ENCODE measurements at regions of chr2 and their contacts with region 1.

Region 1: DNA sequence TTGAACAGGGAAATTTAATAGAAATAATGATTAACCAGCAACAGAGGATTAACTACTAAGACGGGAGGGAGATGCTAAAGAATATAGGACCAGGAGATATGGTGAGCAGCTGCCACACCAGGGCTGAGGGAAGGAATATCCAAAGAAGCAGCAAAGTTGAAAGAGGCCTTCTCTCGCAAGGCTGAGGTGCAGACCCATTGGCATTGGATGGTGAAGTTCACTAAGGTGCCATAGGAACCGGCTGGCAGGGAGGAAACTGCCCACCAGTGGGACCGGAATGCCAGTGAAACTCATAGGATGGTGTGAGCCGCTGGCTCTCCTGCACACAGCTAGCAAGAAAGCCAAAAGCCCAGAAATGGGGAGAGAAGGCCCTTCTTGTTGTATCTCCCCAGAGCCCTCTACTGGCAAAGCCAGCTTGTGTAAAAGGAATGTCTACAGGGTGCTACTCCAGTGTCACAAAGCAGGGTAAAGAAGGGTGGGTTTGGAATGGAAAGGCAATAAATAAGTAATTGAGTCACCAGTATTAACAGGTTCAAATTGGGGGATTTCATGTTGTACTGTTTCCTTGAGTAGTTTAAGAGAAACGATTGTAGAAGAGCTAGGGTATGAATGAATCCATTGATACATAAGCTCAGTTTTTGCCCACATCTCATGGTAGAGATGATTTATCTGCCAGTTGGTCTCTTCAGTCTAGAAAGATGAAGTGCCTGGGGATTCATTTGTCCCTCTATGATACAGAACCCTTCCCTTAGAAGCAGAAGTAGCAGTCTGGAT is 36.0 kb downstream of the FARP2 start:
- DNase-seq: no peak
- ATAC-seq: peak; percentile 89
- H3K4me3 ChIP-seq: no peak overlapping the region
- H3K27ac ChIP-seq: 0 out of 2 replicates have a peak overlapping the region, but pooled peaks have one; percentile 18
- H3K4me1 ChIP-seq: peaks cover 42% of the 10 kb centered on the region
- H3K27me3 ChIP-seq: no peaks in the 10 kb centered on the region
- CTCF ChIP-seq: peak; percentile 63 to 68 (median 65)
- EP300 ChIP-seq: no peak
- POLR2A ChIP-seq: no peak
- RAD21 ChIP-seq: peak; percentile 63

Region 2: GRCh38 chr2:241271641-241272297 is 120.3 kb before region 1 on chr2:
- CTCF ChIA-PET with region 1: interaction called, 10 read pairs
- POLR2A ChIA-PET with region 1: no interaction called
- RAD21 ChIA-PET with region 1: interaction called, 6 read pairs
- SMC1A ChIA-PET with region 1: interaction called, 4 read pairs
- in situ Hi-C with region 1: no loop called
- intact Hi-C with region 1: no loop called
- DNase-seq: no peak
- ATAC-seq: peak; percentile 85
- H3K4me3 ChIP-seq: peak overlapping the region; percentile 75
- H3K27ac ChIP-seq: peak overlapping the region; percentile 79
- H3K4me1 ChIP-seq: peaks cover 17% of the 10 kb centered on the region
- H3K27me3 ChIP-seq: no peaks in the 10 kb centered on the region
- CTCF ChIP-seq: no peak
- EP300 ChIP-seq: no peak
- POLR2A ChIP-seq: peak; percentile 40
- RAD21 ChIP-seq: no peak

Region 3: GRCh38 chr2:241315093-241315878 is 76.8 kb before region 1 on chr2 and contains the start of gene HDLBP:
- CTCF ChIA-PET with region 1: interaction called, 23 read pairs
- POLR2A ChIA-PET with region 1: interaction called, 3 read pairs
- RAD21 ChIA-PET with region 1: interaction called, 13 read pairs
- SMC1A ChIA-PET with region 1: interaction called, 28 read pairs
- in situ Hi-C with region 1: no loop called
- intact Hi-C with region 1: loop called (anchors 5 kb)
- DNase-seq: peak; percentile 96
- ATAC-seq: peak; percentile 80
- H3K4me3 ChIP-seq: peak within 1 kb of the TSS; percentile 90
- H3K27ac ChIP-seq: peak within 1 kb of the TSS; percentile 95
- H3K4me1 ChIP-seq: peaks cover 17% of the 10 kb centered on the region
- H3K27me3 ChIP-seq: no peaks in the 10 kb centered on the region
- CTCF ChIP-seq: peak; percentile 12 to 39 (median 25); a peak in 4 of 6 replicates
- EP300 ChIP-seq: peak; percentile 28 to 30; a peak in 2 of 4 replicates
- POLR2A ChIP-seq: peak; percentile 84
- RAD21 ChIP-seq: 0 out of 2 replicates have a peak, but pooled peaks have one; percentile 4
- polyA plus RNA-seq, gene HDLBP: 19.5 to 56.8 TPM

Region 4: DNA sequence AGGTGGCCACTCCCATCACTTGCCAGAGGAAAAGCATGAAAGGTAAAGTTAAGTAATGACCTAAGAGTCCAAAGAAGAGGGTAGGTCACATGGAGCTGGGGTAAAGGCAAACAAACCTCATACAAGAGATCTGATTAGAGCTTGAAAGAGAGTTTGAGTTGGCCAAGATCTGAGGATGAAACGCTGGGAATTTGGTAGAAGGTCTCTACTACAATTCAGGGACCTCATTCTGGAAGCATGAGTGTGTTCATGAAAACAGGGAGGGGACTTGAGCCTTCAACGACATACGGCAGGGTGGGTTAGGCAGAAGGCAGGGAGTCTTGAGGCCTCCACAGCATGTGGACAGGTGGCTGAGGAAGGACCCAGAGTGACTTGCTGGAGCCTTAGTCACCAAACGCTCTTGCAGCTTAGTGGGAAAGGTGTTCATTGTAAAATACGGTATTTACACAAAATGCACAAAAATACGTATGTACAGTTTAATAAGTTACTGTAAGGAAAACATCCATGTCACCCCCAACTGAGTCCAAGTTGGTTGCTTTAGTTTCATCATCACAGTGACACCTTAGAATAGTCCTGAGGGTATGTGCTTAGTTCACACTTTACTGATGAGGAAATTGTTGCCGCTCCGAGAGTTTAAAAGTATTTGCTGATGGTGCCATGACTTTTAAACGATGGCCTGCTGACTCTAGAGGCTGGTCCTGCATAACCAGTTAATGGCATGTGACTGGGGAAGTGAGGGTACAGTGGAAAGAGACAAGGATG is 41.0 kb before region 1 on chr2:
- CTCF ChIA-PET with region 1: interaction called, 15 read pairs
- POLR2A ChIA-PET with region 1: interaction called, 3 read pairs
- RAD21 ChIA-PET with region 1: interaction called, 4 read pairs
- SMC1A ChIA-PET with region 1: interaction called, 12 read pairs
- in situ Hi-C with region 1: no loop called
- intact Hi-C with region 1: no loop called
- DNase-seq: no peak
- ATAC-seq: no peak
- H3K4me3 ChIP-seq: no peak overlapping the region
- H3K27ac ChIP-seq: no peak overlapping the region
- H3K4me1 ChIP-seq: no peaks in the 10 kb centered on the region; the same call in 1 of the 2 replicates
- H3K27me3 ChIP-seq: no peaks in the 10 kb centered on the region
- CTCF ChIP-seq: no peak
- EP300 ChIP-seq: no peak
- POLR2A ChIP-seq: no peak
- RAD21 ChIP-seq: no peak

Region 5: GRCh38 chr2:241372361-241372992 is 19.6 kb before region 1 on chr2:
- CTCF ChIA-PET with region 1: interaction called, 55 read pairs
- POLR2A ChIA-PET with region 1: interaction called, 11 read pairs
- RAD21 ChIA-PET with region 1: interaction called, 35 read pairs
- SMC1A ChIA-PET with region 1: interaction called, 176 read pairs
- in situ Hi-C with region 1: no loop called
- intact Hi-C with region 1: no loop called
- DNase-seq: no peak
- ATAC-seq: no peak
- H3K4me3 ChIP-seq: no peak overlapping the region
- H3K27ac ChIP-seq: no peak overlapping the region; the same call in 1 of the 2 replicates
- H3K4me1 ChIP-seq: peaks cover 43% of the 10 kb centered on the region
- H3K27me3 ChIP-seq: no peaks in the 10 kb centered on the region
- CTCF ChIP-seq: no peak
- EP300 ChIP-seq: no peak
- POLR2A ChIP-seq: no peak
- RAD21 ChIP-seq: no peak

Region 6: GRCh38 chr2:241443486-241444223 is 51.6 kb after region 1 on chr2:
- CTCF ChIA-PET with region 1: no interaction called
- POLR2A ChIA-PET with region 1: no interaction called
- RAD21 ChIA-PET with region 1: no interaction called
- SMC1A ChIA-PET with region 1: no interaction called
- in situ Hi-C with region 1: no loop called
- intact Hi-C with region 1: no loop called
- DNase-seq: peak; percentile 83
- ATAC-seq: peak; percentile 89
- H3K4me3 ChIP-seq: no peak overlapping the region
- H3K27ac ChIP-seq: no peak overlapping the region
- H3K4me1 ChIP-seq: peaks cover 23% of the 10 kb centered on the region
- H3K27me3 ChIP-seq: no peaks in the 10 kb centered on the region
- CTCF ChIP-seq: no peak
- EP300 ChIP-seq: 0 out of 4 replicates have a peak, but pooled peaks of 1 of the 2 experiments have one; percentile 11
- POLR2A ChIP-seq: no peak
- RAD21 ChIP-seq: no peak

Region 7: DNA sequence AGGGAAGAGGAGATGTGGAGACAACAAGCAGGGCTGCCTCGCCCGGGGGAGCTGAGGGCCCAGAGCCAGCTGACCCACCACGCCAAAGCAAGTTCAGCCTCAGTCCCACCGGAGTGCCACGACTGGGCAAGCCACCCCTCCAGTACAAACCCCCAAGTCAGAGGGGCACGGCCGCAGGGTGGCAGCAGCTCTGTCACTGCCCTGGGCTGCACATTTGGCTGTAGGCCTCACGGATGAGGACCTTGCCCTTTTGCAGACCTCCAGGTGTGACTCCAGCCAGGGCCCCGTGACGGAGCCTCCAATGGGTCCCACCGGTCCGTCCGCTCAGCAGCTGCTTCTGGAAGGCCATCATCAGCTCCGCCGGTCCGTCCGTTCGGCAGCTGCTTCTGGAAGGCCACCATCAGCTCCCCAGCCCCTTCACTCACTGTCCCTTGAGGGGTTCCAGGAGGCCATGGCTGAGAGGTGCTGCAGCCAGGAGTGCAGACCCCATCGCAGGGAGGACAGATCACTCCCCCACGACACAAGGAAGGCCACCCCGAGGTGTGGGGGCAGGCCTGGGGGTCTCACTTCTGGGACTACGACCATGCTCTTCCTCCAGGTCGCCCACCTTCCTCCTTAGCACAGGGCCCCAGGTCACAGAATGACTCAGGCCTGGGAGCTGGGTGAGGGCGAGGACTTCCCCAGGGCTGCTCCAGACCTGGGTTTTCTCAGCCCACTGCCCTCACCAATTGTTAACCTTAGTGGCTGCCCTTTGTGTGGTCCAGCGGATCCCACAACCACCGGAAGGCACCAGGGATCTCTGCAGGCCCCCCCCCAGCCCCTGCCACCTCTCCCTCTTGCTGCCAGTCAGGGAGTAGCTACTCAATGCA is 140.9 kb after region 1 on chr2:
- CTCF ChIA-PET with region 1: no interaction called
- POLR2A ChIA-PET with region 1: no interaction called
- RAD21 ChIA-PET with region 1: no interaction called
- SMC1A ChIA-PET with region 1: no interaction called
- in situ Hi-C with region 1: no loop called
- intact Hi-C with region 1: no loop called
- DNase-seq: no peak
- ATAC-seq: peak; percentile 76
- H3K4me3 ChIP-seq: no peak overlapping the region
- H3K27ac ChIP-seq: no peak overlapping the region
- H3K4me1 ChIP-seq: no peaks in the 10 kb centered on the region; the same call in 1 of the 2 replicates
- H3K27me3 ChIP-seq: peaks cover 0 to 1% of the 10 kb centered on the region in 2 experiments; a peak in 1 of 4 replicates
- CTCF ChIP-seq: no peak
- EP300 ChIP-seq: no peak
- POLR2A ChIP-seq: no peak
- RAD21 ChIP-seq: no peak

Region 8: DNA sequence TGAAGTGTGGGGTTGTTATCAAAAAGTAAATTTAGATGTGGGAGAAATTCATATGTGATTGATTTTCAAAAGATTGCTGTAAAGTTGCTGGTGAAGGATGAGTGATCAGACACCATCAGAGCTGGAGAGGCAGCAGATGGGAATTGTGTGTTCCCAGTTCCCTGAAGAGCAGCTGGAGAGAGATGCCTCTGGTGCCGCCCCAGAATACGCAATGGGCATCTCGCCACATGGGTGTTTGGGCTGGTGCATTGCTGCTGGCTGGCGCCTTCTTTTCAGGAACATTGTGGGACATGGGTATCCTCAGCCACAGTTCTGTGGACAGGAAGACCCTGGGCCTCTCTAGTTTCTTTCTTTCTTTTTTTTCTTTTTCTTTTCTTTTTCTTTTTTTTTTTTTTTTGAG is 257.3 kb after region 1 on chr2:
- CTCF ChIA-PET with region 1: no interaction called
- POLR2A ChIA-PET with region 1: no interaction called
- RAD21 ChIA-PET with region 1: no interaction called
- SMC1A ChIA-PET with region 1: no interaction called
- in situ Hi-C with region 1: no loop called
- intact Hi-C with region 1: no loop called
- DNase-seq: no peak
- ATAC-seq: no peak
- H3K4me3 ChIP-seq: no peak overlapping the region
- H3K27ac ChIP-seq: no peak overlapping the region
- H3K4me1 ChIP-seq: no peaks in the 10 kb centered on the region
- H3K27me3 ChIP-seq: no peaks in the 10 kb centered on the region
- CTCF ChIP-seq: no peak
- EP300 ChIP-seq: no peak
- POLR2A ChIP-seq: no peak
- RAD21 ChIP-seq: no peak

Region 9: GRCh38 chr2:241933179-241933911 is 541.3 kb after region 1 on chr2:
- CTCF ChIA-PET with region 1: no interaction called
- POLR2A ChIA-PET with region 1: no interaction called
- RAD21 ChIA-PET with region 1: no interaction called
- SMC1A ChIA-PET with region 1: no interaction called
- in situ Hi-C with region 1: no loop called
- intact Hi-C with region 1: no loop called
- DNase-seq: no peak
- ATAC-seq: no peak; the same call in 2 of the 3 replicates
- H3K4me3 ChIP-seq: no peak overlapping the region
- H3K27ac ChIP-seq: no peak overlapping the region
- H3K4me1 ChIP-seq: no peaks in the 10 kb centered on the region
- H3K27me3 ChIP-seq: no peaks in the 10 kb centered on the region
- CTCF ChIP-seq: no peak
- EP300 ChIP-seq: no peak
- POLR2A ChIP-seq: no peak
- RAD21 ChIP-seq: no peak